Sciatic nerve (tissue), 2 donors: ENCODE measurements at regions of chr2 and their contacts with region 1.

Region 1: DNA sequence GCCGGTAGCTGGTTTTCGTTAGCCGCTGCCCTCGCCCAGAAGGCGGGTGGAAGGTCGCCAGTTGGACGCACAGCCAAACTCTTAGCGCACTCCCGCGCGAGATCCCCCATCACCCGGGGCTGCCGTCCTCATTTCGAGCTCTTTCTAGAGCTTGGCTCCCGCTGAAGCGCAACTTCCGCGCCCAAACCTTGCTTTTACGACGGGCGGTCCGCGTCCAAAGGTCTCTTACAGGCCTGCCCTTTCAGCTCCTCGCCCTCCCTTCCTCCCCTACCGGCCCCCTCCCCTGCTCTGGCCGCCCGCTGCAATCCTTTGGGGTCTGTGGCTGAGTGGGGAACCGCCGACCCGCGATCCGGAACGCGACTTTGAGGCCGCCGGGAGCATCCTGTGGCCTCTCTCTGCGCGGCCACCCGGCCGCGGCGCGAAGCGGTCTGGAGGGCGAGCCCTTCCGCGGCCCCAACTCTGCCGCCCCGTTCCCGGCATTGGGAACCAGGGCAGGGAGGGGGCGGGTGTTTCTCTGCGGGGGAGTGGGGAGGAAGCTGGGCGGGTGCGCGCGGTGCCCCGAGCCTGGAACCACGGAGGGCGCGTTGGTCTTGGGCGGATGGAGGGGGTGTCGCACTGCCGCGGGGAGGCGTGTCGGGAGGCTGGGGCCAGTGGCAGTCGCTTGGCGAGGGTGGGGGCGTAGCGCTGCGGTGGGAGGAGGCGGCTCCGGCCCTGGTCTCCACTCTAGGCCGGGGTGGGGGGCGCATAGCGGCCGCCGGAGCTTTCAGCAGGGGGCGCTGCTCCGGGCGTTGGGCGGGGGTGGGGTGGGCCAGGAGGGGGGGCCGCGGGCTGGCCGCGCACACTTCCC is at the start of gene GDF7:
- DNase-seq: no peak
- ATAC-seq: peak; percentile 7
- total RNA-seq, gene GDF7: 7.6 TPM

Region 2: GRCh38 chr2:20962939-20963557 is 296.5 kb after region 1 on chr2:
- intact Hi-C with region 1: loop called (anchors 5 kb)
- DNase-seq: peak; percentile 83
- ATAC-seq: peak; percentile 67